WTC11 (cell line): ENCODE measurements at regions of chr2 and their contacts with region 1.

Region 1: GRCh38 chr2:165953655-165954606 is at the start of gene TTC21B:
- DNase-seq: peak; percentile 95
- ATAC-seq: peak; percentile 94
- H3K4me3 Mint-ChIP-seq: no peak within 1 kb of the TSS; the same call in none of the 2 replicates
- H3K27ac Mint-ChIP-seq: no peak within 1 kb of the TSS
- H3K4me1 Mint-ChIP-seq: peaks cover 10% of the 10 kb centered on the region
- H3K27me3 Mint-ChIP-seq: no peaks in the 10 kb centered on the region
- CTCF ChIP-seq: peak; percentile 83
- total RNA-seq, gene TTC21B: 16.9 to 20.8 TPM (median 17.8 TPM) in 3 replicates

Region 2: DNA sequence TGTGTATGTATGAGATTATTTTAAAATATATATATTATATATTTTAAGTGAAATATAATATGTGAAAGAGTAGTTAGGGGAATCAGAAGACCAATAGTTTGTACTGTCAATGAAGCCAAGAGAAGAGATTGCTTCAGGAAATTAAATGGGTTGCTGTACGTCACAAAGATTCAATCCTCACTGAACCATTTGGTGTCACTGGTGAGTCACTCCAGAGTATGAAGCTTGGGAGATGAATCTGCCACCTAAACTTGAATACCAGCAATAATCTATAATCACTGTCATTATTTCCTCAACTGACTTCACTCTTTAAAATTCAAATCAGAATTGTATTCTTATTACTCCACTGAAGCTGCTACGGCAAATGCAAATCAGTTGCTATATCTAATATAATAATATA is 463.7 kb after region 1 on chr2:
- CTCF ChIA-PET with region 1: no interaction called
- POLR2A ChIA-PET with region 1: interaction called, 11 read pairs
- DNase-seq: no peak
- ATAC-seq: peak; percentile 61
- H3K4me3 Mint-ChIP-seq: no peak overlapping the region
- H3K27ac Mint-ChIP-seq: no peak overlapping the region
- H3K4me1 Mint-ChIP-seq: no peaks in the 10 kb centered on the region
- H3K27me3 Mint-ChIP-seq: no peaks in the 10 kb centered on the region
- CTCF ChIP-seq: no peak